ENCODE measurements at regions of chr6 and their contacts with region 1.

Region 1: DNA sequence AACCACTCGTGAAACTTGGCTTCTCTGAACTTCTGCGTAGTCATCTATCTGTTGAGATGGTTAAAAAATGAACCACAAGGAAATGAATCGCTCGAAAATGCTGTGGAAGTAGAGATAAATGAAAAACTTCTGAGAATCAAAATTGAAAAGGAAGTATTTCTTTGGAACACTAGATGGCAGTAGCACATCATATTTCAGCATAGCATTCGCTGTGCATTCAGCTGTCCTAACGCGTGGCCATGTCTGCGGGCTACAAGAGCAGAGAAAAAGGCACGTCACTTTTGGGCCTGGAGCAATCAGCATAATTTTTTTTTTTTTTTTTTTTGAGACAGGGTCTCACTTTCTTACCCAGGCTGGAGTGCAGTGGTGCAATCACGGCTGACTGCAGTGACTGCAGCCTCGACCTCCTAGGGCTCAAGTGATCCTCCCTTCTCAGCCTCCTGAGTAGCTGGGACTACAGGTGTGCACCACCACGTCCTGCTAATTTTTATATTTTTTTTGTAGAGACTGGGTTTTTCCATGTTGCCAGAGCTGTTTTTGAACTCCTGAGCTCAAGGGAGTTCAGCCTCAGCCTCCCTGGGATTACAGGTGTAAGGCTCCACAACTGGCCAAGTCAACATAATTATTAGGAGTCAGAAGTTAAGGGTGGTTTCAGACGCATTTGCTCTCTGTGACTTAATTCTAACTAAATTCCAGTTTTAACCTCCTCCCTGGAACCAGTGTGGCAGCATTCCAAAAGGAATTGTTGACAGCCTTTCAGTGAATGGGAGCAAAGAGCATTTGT is 8.8 kb upstream of the PERP start:
- DNase-seq: peak in 5 of 6 donors; percentile 39 to 70 (median 50)
- ATAC-seq: peak; percentile 84 to 99 (median 97)
- H3K4me3 ChIP-seq: no peak overlapping the region
- H3K27ac ChIP-seq: no peak overlapping the region
- H3K4me1 ChIP-seq: no peaks in the 10 kb centered on the region
- H3K27me3 ChIP-seq: no peaks in the 10 kb centered on the region
- CTCF ChIP-seq: peak; percentile 42 to 67 (median 50)

Region 2: DNA sequence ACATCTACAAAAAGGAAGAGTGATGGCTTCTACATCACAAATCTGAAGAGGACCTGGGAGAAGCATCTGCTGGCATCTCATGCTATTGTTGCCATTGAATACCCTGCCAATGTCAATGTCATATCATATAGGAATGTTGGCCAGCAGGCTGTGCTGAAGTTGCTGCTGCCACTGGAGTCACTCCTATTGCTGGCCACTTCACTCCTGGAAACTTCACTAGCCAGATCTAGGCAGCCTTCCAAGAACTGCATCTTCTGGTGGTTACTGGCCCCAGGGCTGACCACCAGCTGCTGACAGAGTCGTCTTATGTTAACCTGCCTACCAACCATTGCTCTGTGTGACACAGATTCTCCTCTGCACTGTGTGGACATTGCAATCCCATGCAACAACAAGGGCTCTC is 120.7 kb before region 1 on chr6:
- intact Hi-C with region 1: loop called in 1 of 3 experiments (anchors 5 kb)
- DNase-seq: no peak
- ATAC-seq: no peak
- H3K4me3 ChIP-seq: no peak overlapping the region
- H3K27ac ChIP-seq: no peak overlapping the region
- H3K4me1 ChIP-seq: no peaks in the 10 kb centered on the region
- H3K27me3 ChIP-seq: no peaks in the 10 kb centered on the region
- CTCF ChIP-seq: no peak

Region 3: DNA sequence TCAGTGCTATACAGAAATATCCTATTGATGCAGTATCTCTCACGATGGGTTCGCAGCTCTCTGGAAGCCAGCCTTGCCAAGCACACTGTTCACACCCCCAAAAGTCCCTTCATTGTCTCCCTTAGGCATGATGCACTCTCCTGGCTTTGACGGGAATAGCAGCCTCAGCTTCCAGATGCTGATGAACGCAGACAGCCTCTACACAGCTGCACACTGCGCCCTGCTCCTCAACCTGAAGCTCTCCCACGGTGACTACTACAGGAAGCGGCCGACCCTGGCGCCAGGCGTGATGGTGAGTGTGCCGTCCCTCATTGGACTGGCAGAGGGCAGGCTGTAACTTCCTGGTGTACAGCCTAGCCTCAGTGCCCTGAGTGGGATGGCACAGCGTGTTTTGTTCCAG is 162.3 kb after region 1 on chr6:
- intact Hi-C with region 1: loop called in 1 of 3 experiments (anchors 10 kb)
- DNase-seq: peak in 1 of 6 donors; percentile 31
- ATAC-seq: peak; percentile 53 to 87 (median 84)
- H3K4me3 ChIP-seq: no peak overlapping the region
- H3K27ac ChIP-seq: no peak overlapping the region
- H3K4me1 ChIP-seq: no peaks in the 10 kb centered on the region
- H3K27me3 ChIP-seq: no peaks in the 10 kb centered on the region
- CTCF ChIP-seq: no peak

Region 4: GRCh38 chr6:138287144-138287955 is 171.3 kb after region 1 on chr6:
- intact Hi-C with region 1: loop called in 2 of 3 experiments (anchors 5 kb)
- DNase-seq: peak; percentile 65 to 80 (median 72)
- ATAC-seq: peak; percentile 86 to 97 (median 92)
- H3K4me3 ChIP-seq: no peak overlapping the region
- H3K27ac ChIP-seq: no peak overlapping the region
- H3K4me1 ChIP-seq: no peaks in the 10 kb centered on the region
- H3K27me3 ChIP-seq: no peaks in the 10 kb centered on the region
- CTCF ChIP-seq: peak; percentile 52 to 83 (median 72)

Region 5: DNA sequence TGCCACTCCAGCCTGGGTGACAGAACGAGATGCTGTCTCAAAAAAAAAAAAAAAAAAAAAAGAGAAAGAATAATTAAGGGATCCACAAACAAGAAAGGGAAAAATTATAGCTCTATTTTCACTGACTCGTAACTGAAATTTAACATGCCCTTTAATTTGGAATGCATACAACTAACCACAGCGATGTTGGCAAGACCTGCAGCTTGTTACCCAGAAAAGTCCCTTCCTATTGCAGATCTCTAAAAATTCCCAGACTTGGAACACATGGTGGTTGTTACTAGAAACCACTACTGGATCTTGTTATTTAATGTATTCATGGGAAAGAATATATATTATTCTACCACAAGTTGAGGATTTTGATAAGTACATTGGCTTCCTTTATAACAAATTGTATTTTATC is 233.8 kb after region 1 on chr6:
- intact Hi-C with region 1: no loop called
- DNase-seq: no peak
- ATAC-seq: no peak
- H3K4me3 ChIP-seq: no peak overlapping the region
- H3K27ac ChIP-seq: no peak overlapping the region
- H3K4me1 ChIP-seq: peaks cover 0 to 2% (median 0%) of the 10 kb centered on the region in 3 donors
- H3K27me3 ChIP-seq: no peaks in the 10 kb centered on the region
- CTCF ChIP-seq: no peak

Region 6: GRCh38 chr6:138428944-138429598 is 313.0 kb after region 1 on chr6:
- intact Hi-C with region 1: loop called in 1 of 3 experiments (anchors 10 kb)
- DNase-seq: no peak
- ATAC-seq: peak; percentile 67 to 84 (median 78)
- H3K4me3 ChIP-seq: no peak overlapping the region
- H3K27ac ChIP-seq: no peak overlapping the region
- H3K4me1 ChIP-seq: no peaks in the 10 kb centered on the region
- H3K27me3 ChIP-seq: no peaks in the 10 kb centered on the region
- CTCF ChIP-seq: peak in 3 of 4 donors; percentile 39 to 44 (median 44)

Region 7: GRCh38 chr6:138477913-138478539 is 362.0 kb after region 1 on chr6:
- intact Hi-C with region 1: no loop called
- DNase-seq: no peak
- ATAC-seq: peak in 2 of 4 donors; percentile 17 to 69
- H3K4me3 ChIP-seq: no peak overlapping the region
- H3K27ac ChIP-seq: peak overlapping the region in 1 of 4 donors; percentile 26
- H3K4me1 ChIP-seq: peaks cover 0 to 24% (median 16%) of the 10 kb centered on the region in 3 donors
- H3K27me3 ChIP-seq: no peaks in the 10 kb centered on the region
- CTCF ChIP-seq: no peak

Region 8: DNA sequence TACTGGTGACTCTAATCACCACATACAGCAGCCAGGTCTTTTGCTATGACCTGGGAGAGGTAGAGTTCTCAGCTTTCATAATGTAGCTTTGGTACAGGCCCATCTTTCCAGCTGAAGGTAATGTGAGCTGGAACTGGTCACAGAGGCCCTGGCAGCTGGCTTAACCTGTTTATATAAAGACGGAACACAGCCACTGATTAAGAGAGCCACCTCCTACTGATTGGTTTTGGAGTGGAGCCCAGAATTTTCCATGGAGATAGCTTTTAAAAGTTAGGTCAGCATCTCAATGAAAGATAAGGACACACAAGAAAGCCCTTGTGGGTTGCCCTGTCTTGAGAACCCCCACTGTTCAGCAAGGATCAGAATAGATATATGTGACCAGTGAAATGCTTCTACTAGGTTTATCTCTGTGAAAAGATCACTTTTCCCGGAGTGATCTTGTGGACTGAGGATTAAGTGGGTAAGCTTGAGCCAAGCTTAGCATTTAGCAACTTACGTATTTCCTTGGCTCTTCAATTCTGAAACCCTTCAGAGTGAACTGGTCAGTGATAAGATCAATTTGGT is 1472.1 kb after region 1 on chr6:
- intact Hi-C with region 1: no loop called
- DNase-seq: peak in 4 of 6 donors; percentile 73 to 87 (median 80)
- ATAC-seq: peak; percentile 78 to 86 (median 83)
- H3K4me3 ChIP-seq: no peak overlapping the region
- H3K27ac ChIP-seq: peak overlapping the region; percentile 40 to 91 (median 74)
- H3K4me1 ChIP-seq: peaks cover 37 to 57% (median 49%) of the 10 kb centered on the region in 3 donors
- H3K27me3 ChIP-seq: no peaks in the 10 kb centered on the region
- CTCF ChIP-seq: no peak